Activated CD4-positive, alpha-beta T cell treated with anti-CD3 and anti-CD28 coated beads for 36 hours (primary cell): ENCODE measurements at regions of chr1 and their contacts with region 1.

Region 1: GRCh38 chr1:199551967-199552565 is 475.4 kb upstream of the NR5A2 start:
- DNase-seq: peak; percentile 62
- ATAC-seq: no peak
- H3K4me3 Mint-ChIP-seq: no peak overlapping the region
- H3K27ac Mint-ChIP-seq: no peak overlapping the region
- H3K4me1 Mint-ChIP-seq: no peaks in the 10 kb centered on the region
- H3K27me3 Mint-ChIP-seq: peaks cover 8% of the 10 kb centered on the region

Region 2: DNA sequence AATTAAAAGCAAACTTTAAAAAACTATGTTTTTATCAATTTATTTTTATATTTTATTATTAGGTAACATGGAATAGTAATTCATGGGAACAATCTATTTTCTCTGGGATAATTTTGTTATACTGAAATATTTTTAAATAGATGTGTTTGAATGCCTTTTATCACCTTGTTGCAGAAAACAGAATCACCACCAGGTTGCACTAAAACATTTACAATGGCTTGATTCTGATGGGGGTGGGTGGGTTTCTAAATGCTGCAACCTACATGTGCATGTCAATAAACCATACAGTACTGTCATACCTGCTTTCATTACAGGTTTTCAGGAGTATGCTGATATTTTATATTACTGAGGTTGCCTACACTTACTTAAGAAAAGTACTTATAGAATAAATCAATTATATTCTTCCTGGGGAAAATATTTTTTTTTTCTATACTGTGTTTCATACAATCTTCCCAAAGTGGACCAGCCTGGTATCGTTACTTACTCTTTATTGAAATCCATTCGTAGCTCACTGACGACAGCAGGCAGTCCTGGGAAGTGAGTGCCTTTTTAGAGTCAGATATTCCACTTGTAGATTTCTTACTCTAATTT is 780.4 kb before region 1 on chr1:
- CTCF ChIA-PET with region 1: no interaction called
- POLR2A ChIA-PET with region 1: no interaction called
- intact Hi-C with region 1: loop called (anchors 5 kb)
- DNase-seq: peak; percentile 24
- ATAC-seq: peak; percentile 70
- H3K4me3 Mint-ChIP-seq: no peak overlapping the region
- H3K27ac Mint-ChIP-seq: no peak overlapping the region
- H3K4me1 Mint-ChIP-seq: peaks cover 6% of the 10 kb centered on the region
- H3K27me3 Mint-ChIP-seq: no peaks in the 10 kb centered on the region

Region 3: GRCh38 chr1:199123615-199124014 is 428.5 kb before region 1 on chr1:
- CTCF ChIA-PET with region 1: no interaction called
- POLR2A ChIA-PET with region 1: no interaction called
- intact Hi-C with region 1: loop called in 1 of 2 experiments (anchors 10 kb)
- DNase-seq: no peak
- ATAC-seq: no peak
- H3K4me3 Mint-ChIP-seq: no peak overlapping the region
- H3K27ac Mint-ChIP-seq: no peak overlapping the region
- H3K4me1 Mint-ChIP-seq: peaks cover 4% of the 10 kb centered on the region
- H3K27me3 Mint-ChIP-seq: no peaks in the 10 kb centered on the region

Region 4: GRCh38 chr1:199265336-199265735 is 286.7 kb before region 1 on chr1:
- CTCF ChIA-PET with region 1: no interaction called
- POLR2A ChIA-PET with region 1: no interaction called
- intact Hi-C with region 1: loop called in 1 of 2 experiments (anchors 10 kb)
- DNase-seq: no peak
- ATAC-seq: no peak
- H3K4me3 Mint-ChIP-seq: no peak overlapping the region
- H3K27ac Mint-ChIP-seq: no peak overlapping the region
- H3K4me1 Mint-ChIP-seq: peaks cover 6% of the 10 kb centered on the region
- H3K27me3 Mint-ChIP-seq: no peaks in the 10 kb centered on the region